Activated CD4-positive, alpha-beta memory T cell treated with anti-CD3 and anti-CD28 coated beads for 36 hours (primary cell): ENCODE measurements at regions of chr4 and their contacts with region 1.

Region 1: GRCh38 chr4:121096629-121097028 is 24.3 kb upstream of the NDNF start:
- DNase-seq: no peak
- H3K4me3 Mint-ChIP-seq: no peak overlapping the region
- H3K27ac Mint-ChIP-seq: no peak overlapping the region
- H3K4me1 Mint-ChIP-seq: no peaks in the 10 kb centered on the region
- H3K27me3 Mint-ChIP-seq: no peaks in the 10 kb centered on the region

Region 2: DNA sequence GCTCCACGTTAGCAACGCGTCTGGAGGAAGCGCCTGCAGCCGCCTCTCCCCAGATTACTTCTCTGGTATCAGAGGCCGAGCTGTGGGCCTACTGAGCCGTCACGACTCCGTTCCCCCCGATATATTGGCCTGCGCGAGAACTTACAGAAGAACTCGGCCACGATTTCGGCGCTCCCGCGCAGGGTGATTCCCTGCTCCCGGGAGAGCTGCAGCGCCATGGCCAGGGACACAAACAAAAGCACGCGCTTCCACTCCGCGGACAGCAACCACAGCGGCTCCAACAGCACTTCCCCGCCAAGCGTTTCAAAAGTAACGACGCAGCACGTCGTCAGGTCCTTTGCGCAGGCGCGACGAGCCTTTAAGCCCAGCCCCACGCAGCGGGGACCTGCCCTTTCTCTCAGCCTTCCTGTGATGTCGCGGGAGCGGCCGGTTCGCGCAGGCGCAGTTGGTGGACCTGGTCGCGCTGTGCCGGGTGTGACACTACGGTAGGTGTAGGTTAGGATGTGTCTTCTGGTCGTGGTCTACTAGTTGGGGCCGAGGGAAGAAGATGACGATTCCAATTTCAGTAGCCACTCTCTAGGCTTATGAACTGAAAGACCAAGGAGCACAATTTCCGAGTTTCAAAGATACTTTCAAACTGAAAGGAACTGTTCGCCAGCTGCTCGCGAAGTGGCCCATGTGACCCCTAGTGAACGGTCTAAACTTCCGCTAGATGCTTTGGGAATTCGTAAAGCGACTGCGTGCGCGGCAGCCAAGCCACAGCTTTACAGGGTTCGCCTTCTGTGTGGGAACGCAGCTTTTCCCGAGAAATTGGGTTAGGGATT is 1029.9 kb before region 1 on chr4 and contains the start of gene MAD2L1:
- CTCF ChIA-PET with region 1: no interaction called
- POLR2A ChIA-PET with region 1: no interaction called
- intact Hi-C with region 1: loop called (anchors 1 kb)
- DNase-seq: peak; percentile 99
- H3K4me3 Mint-ChIP-seq: peak within 1 kb of the TSS; percentile 98
- H3K27ac Mint-ChIP-seq: peak within 1 kb of the TSS; percentile 99
- H3K4me1 Mint-ChIP-seq: peaks cover 58% of the 10 kb centered on the region
- H3K27me3 Mint-ChIP-seq: no peaks in the 10 kb centered on the region
- total RNA-seq, gene MAD2L1: 92.0 to 96.6 TPM